Activated CD4-positive, alpha-beta memory T cell treated with anti-CD3 and anti-CD28 coated beads, Interleukin-2, amount 10 ng/mL, durations not matched to agents 7 days and 5 days (primary cell): ENCODE measurements at regions of chr13 and their contacts with region 1.

Region 1: DNA sequence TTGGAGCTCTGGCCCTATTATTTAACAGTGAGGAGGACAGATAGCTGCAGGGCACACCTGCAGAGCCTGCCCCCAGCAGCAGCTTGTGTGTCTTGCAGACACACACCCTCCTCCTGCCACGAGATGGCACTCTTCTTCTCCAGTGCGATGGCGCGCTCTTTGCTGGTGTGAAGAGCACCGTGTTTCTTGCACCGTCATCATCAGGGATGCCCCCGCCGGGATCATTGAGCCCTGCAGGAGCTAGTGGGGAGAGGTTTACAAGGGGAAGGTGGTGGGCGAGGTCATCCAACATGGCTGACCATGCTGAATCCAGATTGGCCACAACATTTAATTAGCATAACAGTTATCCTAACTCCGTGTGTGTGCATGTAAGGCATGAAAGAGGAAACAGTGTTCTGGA is 105.6 kb downstream of the RAB20 start:
- DNase-seq: peak; percentile 72
- H3K4me3 Mint-ChIP-seq: no peak overlapping the region
- H3K27ac Mint-ChIP-seq: no peak overlapping the region
- H3K4me1 Mint-ChIP-seq: peaks cover 3% of the 10 kb centered on the region
- H3K27me3 Mint-ChIP-seq: peaks cover 19% of the 10 kb centered on the region

Region 2: GRCh38 chr13:110561344-110562035 is 105.5 kb after region 1 on chr13 and contains the start of gene RAB20:
- CTCF ChIA-PET with region 1: interaction called, 13 read pairs
- POLR2A ChIA-PET with region 1: no interaction called
- DNase-seq: peak; percentile 68
- H3K4me3 Mint-ChIP-seq: peak within 1 kb of the TSS; percentile 94
- H3K27ac Mint-ChIP-seq: peak within 1 kb of the TSS; percentile 75
- H3K4me1 Mint-ChIP-seq: peaks cover 36% of the 10 kb centered on the region
- H3K27me3 Mint-ChIP-seq: peaks cover 40% of the 10 kb centered on the region
- total RNA-seq, gene RAB20: 6.9 to 7.2 TPM

Region 3: DNA sequence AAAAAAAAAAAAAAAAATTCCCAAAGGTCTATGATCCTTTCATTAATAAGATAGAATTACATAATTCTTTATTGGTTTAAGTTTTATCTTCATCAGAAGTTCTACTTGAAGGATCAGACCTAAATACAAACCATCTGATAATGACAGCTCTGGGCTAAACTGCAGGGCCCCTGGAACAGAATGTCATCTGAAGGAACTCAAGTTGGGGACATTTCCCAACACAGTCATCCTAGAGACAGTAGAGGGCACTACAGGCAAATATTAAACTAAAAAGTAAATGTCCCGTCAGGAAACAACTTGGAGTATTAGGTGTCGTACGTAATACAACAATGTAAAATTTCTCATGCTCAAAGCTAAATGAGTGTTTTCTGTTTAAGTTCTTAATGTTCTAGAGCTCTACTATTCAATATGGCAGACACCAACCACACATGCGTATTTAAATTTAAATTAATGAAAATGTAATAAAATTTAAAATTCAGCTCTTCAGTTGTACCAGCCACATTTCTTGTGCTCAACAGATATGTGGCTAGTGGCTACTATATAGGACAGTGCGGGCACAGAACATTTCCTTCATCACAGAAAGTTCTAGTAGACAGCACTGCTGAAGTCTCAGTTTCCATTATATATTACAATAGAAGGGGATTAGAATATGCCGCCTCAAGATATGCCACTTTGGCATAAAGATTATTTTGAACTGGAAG is 137.6 kb after region 1 on chr13:
- CTCF ChIA-PET with region 1: interaction called, 12 read pairs
- POLR2A ChIA-PET with region 1: no interaction called
- DNase-seq: no peak
- H3K4me3 Mint-ChIP-seq: no peak overlapping the region
- H3K27ac Mint-ChIP-seq: no peak overlapping the region
- H3K4me1 Mint-ChIP-seq: no peaks in the 10 kb centered on the region
- H3K27me3 Mint-ChIP-seq: peaks cover 7% of the 10 kb centered on the region

Region 4: DNA sequence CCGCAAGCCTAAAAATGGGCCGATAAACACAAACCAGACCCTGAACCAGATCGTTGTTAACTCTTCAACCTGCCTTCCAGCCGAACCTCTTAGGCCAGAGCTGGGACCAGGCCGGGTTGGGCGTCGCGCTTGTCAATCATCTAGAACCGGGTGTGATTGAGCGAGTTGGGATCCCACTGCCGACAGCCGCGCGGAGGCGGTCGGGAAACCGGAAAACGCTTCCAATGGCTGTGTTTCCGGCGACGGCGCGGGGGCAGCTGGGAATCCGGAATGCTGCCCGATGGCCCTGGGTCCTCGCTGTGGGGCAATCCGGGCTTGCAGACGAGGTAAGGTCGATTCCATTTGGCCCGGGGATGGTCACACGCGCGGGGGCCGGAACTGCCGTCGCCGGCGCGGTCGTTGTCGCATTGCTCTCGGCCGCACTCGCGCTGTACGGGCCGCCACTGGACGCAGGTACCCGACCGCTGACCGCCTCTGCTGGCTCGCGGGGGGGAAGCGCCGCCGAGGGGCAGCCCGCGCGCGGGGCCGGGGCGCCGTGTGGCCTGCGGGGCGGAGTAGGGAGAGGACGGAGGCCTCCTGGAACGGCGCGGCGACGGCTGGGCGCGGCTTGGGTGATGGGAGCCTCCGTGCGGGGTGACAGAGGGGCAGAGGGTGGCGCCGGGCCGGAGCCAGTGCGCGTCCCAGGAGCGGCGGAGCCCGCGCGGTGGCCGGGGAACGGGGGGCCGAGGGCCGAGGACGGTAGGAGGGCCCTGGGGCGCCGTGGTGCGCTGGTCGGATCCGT is 159.6 kb after region 1 on chr13 and contains the start of gene NAXD:
- CTCF ChIA-PET with region 1: interaction called, 11 read pairs
- POLR2A ChIA-PET with region 1: no interaction called
- DNase-seq: peak; percentile 84
- H3K4me3 Mint-ChIP-seq: peak within 1 kb of the TSS; percentile 93
- H3K27ac Mint-ChIP-seq: peak within 1 kb of the TSS; percentile 87
- H3K4me1 Mint-ChIP-seq: peaks cover 40% of the 10 kb centered on the region
- H3K27me3 Mint-ChIP-seq: no peaks in the 10 kb centered on the region
- total RNA-seq, gene NAXD: 29.6 to 30.8 TPM